ENCODE measurements at regions of chr11 and their contacts with region 1.

Region 1: GRCh38 chr11:12417728-12418611 is 40.6 kb downstream of the PARVA start:
- DNase-seq: peak; percentile 38
- ATAC-seq: peak; percentile 67 to 90

Region 2: GRCh38 chr11:12469451-12469850 is 51.5 kb after region 1 on chr11:
- intact Hi-C with region 1: loop called in 1 of 2 experiments (anchors 5 kb)
- DNase-seq: no peak
- ATAC-seq: peak; percentile 29 to 86